ENCODE measurements at regions of chr1 and their contacts with region 1.

Region 1: DNA sequence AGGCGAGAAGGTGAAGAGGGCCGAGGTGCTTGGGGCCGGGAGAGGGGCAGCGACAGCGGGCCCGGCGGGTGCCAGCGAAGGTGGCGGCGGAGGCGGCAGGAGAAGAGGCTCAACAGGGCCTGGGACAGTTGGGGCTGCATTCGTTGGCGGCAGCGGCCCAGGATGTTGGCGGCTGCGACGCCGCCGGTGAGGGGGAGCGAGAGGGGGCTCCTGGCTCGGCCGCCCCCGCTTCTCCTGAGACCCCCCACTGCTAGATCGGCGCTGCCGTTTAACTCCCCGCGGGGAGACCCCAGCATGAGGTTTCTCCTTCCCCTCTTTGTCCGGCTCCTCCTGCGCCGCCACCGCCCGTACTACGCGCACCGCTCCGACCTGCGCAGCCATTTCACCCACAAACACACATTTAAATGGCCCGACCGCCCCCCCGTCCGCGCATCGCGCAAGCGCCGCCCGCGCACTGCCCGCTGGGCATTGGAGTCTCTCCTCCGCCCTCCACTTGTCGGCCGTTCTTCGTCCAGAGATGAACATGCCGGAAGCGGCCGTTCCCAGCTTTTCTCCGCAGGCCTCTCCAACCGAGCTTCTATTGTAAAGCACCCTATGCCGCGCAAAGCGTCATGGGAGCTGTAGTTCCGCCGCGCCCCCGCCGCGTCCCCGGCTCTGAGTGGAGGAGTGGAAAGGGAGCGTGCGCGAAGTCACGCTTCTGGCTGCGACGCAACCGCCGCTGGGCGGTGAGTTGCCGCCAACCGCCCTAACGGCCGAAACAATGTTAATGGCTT is at the start of gene RSBN1:
- DNase-seq: peak; percentile 100
- total RNA-seq, gene RSBN1: 11.0 TPM

Region 2: DNA sequence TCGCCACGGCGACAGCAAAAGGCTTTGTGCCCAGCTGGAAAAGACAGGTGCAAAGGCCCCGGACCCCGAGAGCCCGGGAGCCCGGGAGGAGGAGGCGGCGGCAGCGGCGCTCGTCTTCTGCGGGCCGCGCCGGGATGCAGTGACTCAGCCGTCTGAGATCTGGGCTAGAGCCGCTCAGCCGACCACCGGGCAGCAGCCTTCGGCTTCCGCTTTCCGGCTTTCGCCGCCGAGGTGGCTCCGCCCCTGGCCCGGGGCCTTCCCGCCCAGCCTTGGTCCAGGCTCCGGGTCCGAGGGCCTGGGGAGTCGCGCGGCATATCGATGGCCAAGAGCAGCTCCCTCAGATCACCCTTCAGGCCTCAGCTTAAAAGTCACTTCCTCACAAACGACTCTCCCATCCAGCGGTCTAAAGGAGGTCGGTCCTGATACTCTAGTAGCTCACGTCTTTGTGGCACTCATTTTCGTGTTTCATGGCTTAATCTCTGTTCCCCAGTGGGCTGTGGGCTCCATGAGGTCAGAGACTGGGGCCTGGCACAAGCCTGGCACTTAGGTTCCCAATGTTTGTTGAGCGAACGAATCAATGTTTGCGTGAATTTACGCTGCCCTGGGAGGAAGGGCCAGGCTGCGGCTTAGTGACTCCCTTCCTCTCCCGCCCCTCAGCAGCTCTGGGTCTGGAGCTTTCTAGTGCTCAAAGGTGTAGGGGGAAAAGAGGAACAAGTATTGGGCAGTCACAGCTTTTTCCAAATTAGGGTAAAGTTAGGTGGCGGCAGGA is 52.6 kb before region 1 on chr1 and contains the start of gene PHTF1:
- intact Hi-C with region 1: loop called (anchors 1 kb)
- DNase-seq: peak; percentile 93
- total RNA-seq, gene PHTF1: 15.0 TPM

Region 3: GRCh38 chr1:113928941-113929749 is 117.1 kb after region 1 on chr1 and contains the start of gene HIPK1:
- intact Hi-C with region 1: loop called (anchors 5 kb)
- DNase-seq: peak; percentile 97
- total RNA-seq, gene HIPK1: 63.5 TPM

Measured in cardiac septum (tissue), 1 donor.